Spleen (tissue), 13 donors: ENCODE measurements at regions of chr17 and their contacts with region 1.

Region 1: GRCh38 chr17:44218344-44219107 is 949 bp downstream of the UBTF start:
- DNase-seq: peak; percentile 97
- H3K4me3 ChIP-seq: peak overlapping the region; percentile 75 to 96 (median 87)
- H3K27ac ChIP-seq: peak overlapping the region; percentile 97 to 100 (median 99)
- H3K4me1 ChIP-seq: peaks cover 33 to 74% (median 63%) of the 10 kb centered on the region in 6 donors
- H3K27me3 ChIP-seq: no peaks in the 10 kb centered on the region
- CTCF ChIP-seq: peak; percentile 21 to 93 (median 77)
- POLR2A ChIP-seq: peak in 1 of 3 donors; percentile 53

Region 2: GRCh38 chr17:44141717-44142285 is 76.7 kb before region 1 on chr17 and contains the start of gene HROB:
- intact Hi-C with region 1: no loop called
- DNase-seq: peak; percentile 98
- H3K4me3 ChIP-seq: peak within 1 kb of the TSS; percentile 50 to 81 (median 69)
- H3K27ac ChIP-seq: peak within 1 kb of the TSS in 4 of 8 donors; percentile 65 to 82 (median 76)
- H3K4me1 ChIP-seq: peaks cover 3 to 31% (median 14%) of the 10 kb centered on the region in 6 donors
- H3K27me3 ChIP-seq: peaks cover 0 to 34% (median 0%) of the 10 kb centered on the region in 7 donors
- CTCF ChIP-seq: peak; percentile 83 to 97 (median 93)
- POLR2A ChIP-seq: no peak
- total RNA-seq, gene HROB: 1.3 to 4.1 (median 1.8) TPM

Region 3: DNA sequence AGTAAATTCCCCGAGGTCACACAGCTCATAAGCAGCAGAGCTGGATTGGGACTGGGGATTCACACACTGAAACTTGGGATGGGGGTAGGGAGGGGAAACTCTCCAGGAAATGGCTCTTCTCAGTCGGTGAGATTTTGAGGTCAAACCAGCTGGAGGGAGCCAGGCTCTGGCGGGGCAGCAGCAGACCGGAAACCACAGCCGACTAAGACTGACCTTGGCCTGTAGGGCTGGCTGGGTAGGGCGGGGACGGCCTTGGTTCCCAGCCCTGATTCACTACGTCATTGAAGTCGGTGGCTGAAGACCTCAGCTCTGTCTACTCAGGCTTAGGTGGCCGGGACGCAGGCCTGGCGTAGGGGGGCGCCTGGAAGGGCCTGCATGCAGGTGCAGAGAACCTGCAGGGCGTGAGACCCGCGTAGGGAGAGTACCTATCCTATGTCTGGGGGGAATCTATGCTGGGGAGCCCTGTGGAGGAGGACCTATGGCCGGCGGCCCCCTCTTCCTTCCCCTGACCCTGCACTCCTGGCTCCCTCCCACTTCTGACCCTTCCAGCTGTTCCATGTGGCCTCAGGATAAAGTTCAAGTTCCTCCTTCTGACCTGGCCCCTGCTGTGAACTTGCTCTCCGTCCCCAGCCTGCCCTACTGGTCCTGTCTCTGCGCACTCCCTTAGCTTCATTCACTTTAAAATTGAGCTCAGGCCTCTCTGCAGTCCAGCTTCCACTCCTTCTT is 61.3 kb after region 1 on chr17:
- intact Hi-C with region 1: loop called (anchors 10 kb)
- DNase-seq: peak; percentile 89
- H3K4me3 ChIP-seq: peak overlapping the region in 1 of 8 donors; percentile 17
- H3K27ac ChIP-seq: peak overlapping the region; percentile 61 to 87 (median 80)
- H3K4me1 ChIP-seq: peaks cover 12 to 33% (median 25%) of the 10 kb centered on the region in 6 donors
- H3K27me3 ChIP-seq: no peaks in the 10 kb centered on the region
- CTCF ChIP-seq: no peak
- POLR2A ChIP-seq: no peak

Region 4: GRCh38 chr17:44324571-44325275 is 106.2 kb after region 1 on chr17 and contains the start of gene SLC25A39:
- intact Hi-C with region 1: loop called (anchors 2 kb)
- DNase-seq: peak; percentile 99
- H3K4me3 ChIP-seq: peak within 1 kb of the TSS; percentile 84 to 99 (median 94)
- H3K27ac ChIP-seq: peak within 1 kb of the TSS; percentile 79 to 98 (median 93)
- H3K4me1 ChIP-seq: peaks cover 15 to 64% (median 43%) of the 10 kb centered on the region in 6 donors
- H3K27me3 ChIP-seq: no peaks in the 10 kb centered on the region
- CTCF ChIP-seq: peak in 3 of 11 experiments; percentile 0 to 6 (median 4)
- POLR2A ChIP-seq: peak in 1 of 3 donors; percentile 17
- total RNA-seq, gene SLC25A39: 76.1 to 214 (median 104) TPM